GM12878 (cell line): ENCODE measurements at regions of chr7 and their contacts with region 1.

Region 1: DNA sequence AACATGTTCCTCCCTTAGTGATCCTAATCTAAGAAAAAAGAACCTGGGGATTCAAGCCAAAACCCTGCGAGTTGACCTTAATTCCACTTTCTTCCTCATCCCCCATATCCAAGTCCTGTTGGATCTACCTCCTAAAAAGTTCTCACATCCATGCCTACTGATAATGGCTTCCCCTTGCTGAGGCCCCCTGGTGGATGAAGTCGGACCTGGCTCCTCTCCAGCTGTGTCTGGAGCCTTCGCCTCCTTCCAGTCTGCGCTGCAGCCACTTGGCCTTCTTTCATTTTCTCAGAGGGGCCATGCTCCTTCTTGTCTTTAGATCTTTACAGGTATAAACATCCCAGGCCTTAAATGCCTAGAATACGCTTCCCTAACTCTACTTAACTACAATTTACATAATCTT is 8.1 kb downstream of the PDE1C start:
- DNase-seq: no peak
- ATAC-seq: peak; percentile 74
- H3K4me3 ChIP-seq: no peak overlapping the region
- H3K27ac ChIP-seq: no peak overlapping the region
- H3K4me1 ChIP-seq: no peaks in the 10 kb centered on the region
- H3K27me3 ChIP-seq: no peaks in the 10 kb centered on the region; a peak in 1 of 4 replicates
- CTCF ChIP-seq: peak; percentile 41 to 66 (median 54)
- EP300 ChIP-seq: no peak
- POLR2A ChIP-seq: no peak
- RAD21 ChIP-seq: peak; percentile 47

Region 2: GRCh38 chr7:31744294-31744874 is 317.8 kb before region 1 on chr7:
- CTCF ChIA-PET with region 1: interaction called, 4 read pairs
- POLR2A ChIA-PET with region 1: no interaction called
- RAD21 ChIA-PET with region 1: no interaction called
- SMC1A ChIA-PET with region 1: no interaction called
- in situ Hi-C with region 1: no loop called
- intact Hi-C with region 1: loop called (anchors 5 kb)
- DNase-seq: peak; percentile 33
- ATAC-seq: peak; percentile 89
- H3K4me3 ChIP-seq: no peak overlapping the region
- H3K27ac ChIP-seq: no peak overlapping the region
- H3K4me1 ChIP-seq: no peaks in the 10 kb centered on the region
- H3K27me3 ChIP-seq: no peaks in the 10 kb centered on the region
- CTCF ChIP-seq: peak; percentile 76 to 88 (median 83)
- EP300 ChIP-seq: no peak
- POLR2A ChIP-seq: no peak
- RAD21 ChIP-seq: peak; percentile 98

Region 3: GRCh38 chr7:31811650-31812461 is 250.3 kb before region 1 on chr7:
- CTCF ChIA-PET with region 1: interaction called, 3 read pairs
- POLR2A ChIA-PET with region 1: no interaction called
- RAD21 ChIA-PET with region 1: interaction called, 3 read pairs
- SMC1A ChIA-PET with region 1: interaction called, 10 read pairs
- in situ Hi-C with region 1: no loop called
- intact Hi-C with region 1: no loop called
- DNase-seq: peak; percentile 58
- ATAC-seq: peak; percentile 93
- H3K4me3 ChIP-seq: no peak overlapping the region
- H3K27ac ChIP-seq: no peak overlapping the region
- H3K4me1 ChIP-seq: no peaks in the 10 kb centered on the region
- H3K27me3 ChIP-seq: no peaks in the 10 kb centered on the region
- CTCF ChIP-seq: no peak
- EP300 ChIP-seq: peak; percentile 83 to 95
- POLR2A ChIP-seq: no peak
- RAD21 ChIP-seq: no peak

Region 4: GRCh38 chr7:32042900-32043299 is 19.2 kb before region 1 on chr7:
- CTCF ChIA-PET with region 1: interaction called, 16 read pairs
- POLR2A ChIA-PET with region 1: no interaction called
- RAD21 ChIA-PET with region 1: interaction called, 6 read pairs
- SMC1A ChIA-PET with region 1: interaction called, 69 read pairs
- in situ Hi-C with region 1: no loop called
- intact Hi-C with region 1: no loop called
- DNase-seq: no peak
- ATAC-seq: peak; percentile 33
- H3K4me3 ChIP-seq: no peak overlapping the region
- H3K27ac ChIP-seq: no peak overlapping the region
- H3K4me1 ChIP-seq: no peaks in the 10 kb centered on the region
- H3K27me3 ChIP-seq: no peaks in the 10 kb centered on the region
- CTCF ChIP-seq: peak in 1 of 3 experiments; percentile 14; a peak in 1 of 6 replicates
- EP300 ChIP-seq: no peak
- POLR2A ChIP-seq: no peak
- RAD21 ChIP-seq: peak; percentile 21; the same call in 1 of the 2 replicates

Region 5: GRCh38 chr7:32048970-32049491 is 13.1 kb before region 1 on chr7:
- CTCF ChIA-PET with region 1: interaction called, 26 read pairs
- POLR2A ChIA-PET with region 1: no interaction called
- RAD21 ChIA-PET with region 1: interaction called, 6 read pairs
- SMC1A ChIA-PET with region 1: interaction called, 69 read pairs
- in situ Hi-C with region 1: no loop called
- intact Hi-C with region 1: no loop called
- DNase-seq: peak; percentile 48
- ATAC-seq: peak; percentile 83
- H3K4me3 ChIP-seq: no peak overlapping the region
- H3K27ac ChIP-seq: no peak overlapping the region
- H3K4me1 ChIP-seq: no peaks in the 10 kb centered on the region
- H3K27me3 ChIP-seq: 0 out of 4 replicates have a peak, but pooled peaks cover 0 to 3% of the 10 kb centered on the region in 2 experiments
- CTCF ChIP-seq: no peak
- EP300 ChIP-seq: no peak
- POLR2A ChIP-seq: no peak
- RAD21 ChIP-seq: no peak

Region 6: GRCh38 chr7:32381024-32381601 is 319.0 kb after region 1 on chr7:
- CTCF ChIA-PET with region 1: no interaction called
- POLR2A ChIA-PET with region 1: no interaction called
- RAD21 ChIA-PET with region 1: no interaction called
- SMC1A ChIA-PET with region 1: no interaction called
- in situ Hi-C with region 1: no loop called
- intact Hi-C with region 1: no loop called
- DNase-seq: no peak
- ATAC-seq: peak; percentile 42; the same call in 1 of the 3 replicates
- H3K4me3 ChIP-seq: no peak overlapping the region
- H3K27ac ChIP-seq: no peak overlapping the region
- H3K4me1 ChIP-seq: no peaks in the 10 kb centered on the region
- H3K27me3 ChIP-seq: peaks cover 0 to 3% of the 10 kb centered on the region in 2 experiments; a peak in 1 of 4 replicates
- CTCF ChIP-seq: no peak
- EP300 ChIP-seq: no peak
- POLR2A ChIP-seq: no peak
- RAD21 ChIP-seq: no peak